Activated naive CD4-positive, alpha-beta T cell treated with anti-CD3 and anti-CD28 coated beads for 36 hours (primary cell): ENCODE measurements at regions of chr14 and their contacts with region 1.

Region 1: GRCh38 chr14:68718023-68718995 is 74.6 kb downstream of the ZFP36L1 start:
- DNase-seq: peak; percentile 34
- H3K4me3 Mint-ChIP-seq: no peak overlapping the region
- H3K27ac Mint-ChIP-seq: no peak overlapping the region
- H3K4me1 Mint-ChIP-seq: peaks cover 32% of the 10 kb centered on the region
- H3K27me3 Mint-ChIP-seq: no peaks in the 10 kb centered on the region

Region 2: DNA sequence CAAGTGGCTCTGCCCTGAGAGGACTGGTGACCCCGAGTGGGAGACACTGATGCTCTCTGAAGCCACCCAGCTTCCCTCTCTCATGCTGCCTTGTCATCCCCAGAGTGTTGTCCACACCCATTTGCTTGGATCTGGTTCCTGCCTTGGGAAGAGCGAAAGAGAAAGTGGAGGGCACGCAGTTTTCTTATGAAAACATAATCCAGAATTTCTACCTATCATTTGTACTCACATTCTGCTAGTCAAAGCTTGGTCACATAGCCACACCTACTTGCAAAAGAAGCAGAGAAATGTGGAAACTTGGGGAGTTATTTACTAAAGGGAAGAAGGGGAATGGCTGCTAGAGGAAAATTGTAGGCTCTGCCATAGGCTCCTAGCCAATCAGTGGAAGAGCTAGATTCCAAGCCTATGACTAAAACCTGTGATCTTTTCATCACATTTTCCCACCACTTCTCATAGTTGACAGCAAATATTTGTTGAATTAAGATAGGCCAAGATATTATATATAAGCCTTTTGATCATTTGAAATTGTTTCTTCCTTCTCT is 251.7 kb before region 1 on chr14:
- CTCF ChIA-PET with region 1: no interaction called
- intact Hi-C with region 1: loop called (anchors 1 kb)
- DNase-seq: no peak
- H3K4me3 Mint-ChIP-seq: no peak overlapping the region
- H3K27ac Mint-ChIP-seq: no peak overlapping the region
- H3K4me1 Mint-ChIP-seq: peaks cover 30% of the 10 kb centered on the region
- H3K27me3 Mint-ChIP-seq: no peaks in the 10 kb centered on the region

Region 3: DNA sequence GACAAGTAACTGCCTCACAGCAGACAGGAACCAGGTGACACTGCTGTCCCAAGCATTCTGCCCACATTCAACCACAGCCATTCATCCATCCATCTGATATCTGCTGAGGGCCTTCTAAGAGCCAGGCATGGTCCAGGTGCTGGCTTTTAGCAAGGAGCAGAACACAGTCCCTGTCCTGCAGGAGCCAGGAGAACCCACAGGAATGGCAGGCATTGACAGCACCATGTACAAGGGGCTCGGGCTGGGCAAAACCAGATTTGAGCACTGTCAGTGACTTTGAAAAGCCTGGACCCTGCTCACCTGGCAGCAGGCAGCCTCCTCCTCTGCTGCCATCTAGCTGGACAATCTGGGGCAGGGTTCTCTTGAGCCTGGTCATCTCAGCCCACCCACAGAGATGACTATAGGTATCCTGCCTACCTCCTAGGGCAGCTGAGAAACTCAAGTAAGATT is 62.4 kb before region 1 on chr14:
- CTCF ChIA-PET with region 1: no interaction called
- intact Hi-C with region 1: no loop called
- DNase-seq: no peak
- H3K4me3 Mint-ChIP-seq: no peak overlapping the region
- H3K27ac Mint-ChIP-seq: no peak overlapping the region
- H3K4me1 Mint-ChIP-seq: peaks cover 4% of the 10 kb centered on the region
- H3K27me3 Mint-ChIP-seq: no peaks in the 10 kb centered on the region

Region 4: DNA sequence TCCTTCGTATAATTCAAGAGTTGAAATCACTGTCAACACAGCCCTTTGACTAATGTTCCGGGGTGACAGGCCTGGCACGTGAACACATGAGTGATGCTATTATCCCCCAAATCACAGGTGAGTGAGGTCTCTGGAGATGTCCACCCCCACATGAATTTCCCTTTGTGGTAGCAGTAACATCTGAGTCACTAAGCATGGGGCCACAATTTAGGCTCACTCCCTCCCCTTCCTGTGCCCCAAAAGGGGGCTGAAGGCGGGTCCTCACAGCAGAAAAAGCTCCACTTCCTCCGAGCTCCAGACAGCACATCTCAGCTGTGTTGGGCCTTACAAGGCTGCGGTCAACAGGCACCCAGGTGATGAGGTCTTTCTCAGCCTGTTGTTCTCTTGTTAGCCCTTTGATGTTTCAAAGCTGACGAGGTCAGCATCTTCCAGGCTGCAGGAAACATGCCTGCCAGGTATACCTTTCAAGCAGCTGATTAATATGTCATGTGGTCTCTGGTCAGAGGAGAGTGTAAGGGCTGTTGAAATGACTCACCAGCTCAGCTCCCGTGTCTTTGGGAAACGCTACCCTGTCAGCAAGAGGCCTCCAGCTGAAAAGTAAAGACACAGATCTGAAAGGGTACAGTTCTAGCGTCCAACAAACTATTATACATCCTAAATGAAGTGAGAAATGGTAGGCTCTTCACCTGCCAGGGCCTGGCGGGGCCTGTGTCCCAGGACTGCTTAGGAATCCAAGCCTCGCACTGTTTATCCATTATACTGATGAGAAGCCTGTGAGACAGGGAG is 32.7 kb before region 1 on chr14:
- CTCF ChIA-PET with region 1: interaction called, 4 read pairs
- intact Hi-C with region 1: loop called (anchors 1 kb)
- DNase-seq: peak; percentile 90
- H3K4me3 Mint-ChIP-seq: peak overlapping the region; percentile 19
- H3K27ac Mint-ChIP-seq: peak overlapping the region; percentile 91
- H3K4me1 Mint-ChIP-seq: peaks cover 54% of the 10 kb centered on the region
- H3K27me3 Mint-ChIP-seq: no peaks in the 10 kb centered on the region

Region 5: DNA sequence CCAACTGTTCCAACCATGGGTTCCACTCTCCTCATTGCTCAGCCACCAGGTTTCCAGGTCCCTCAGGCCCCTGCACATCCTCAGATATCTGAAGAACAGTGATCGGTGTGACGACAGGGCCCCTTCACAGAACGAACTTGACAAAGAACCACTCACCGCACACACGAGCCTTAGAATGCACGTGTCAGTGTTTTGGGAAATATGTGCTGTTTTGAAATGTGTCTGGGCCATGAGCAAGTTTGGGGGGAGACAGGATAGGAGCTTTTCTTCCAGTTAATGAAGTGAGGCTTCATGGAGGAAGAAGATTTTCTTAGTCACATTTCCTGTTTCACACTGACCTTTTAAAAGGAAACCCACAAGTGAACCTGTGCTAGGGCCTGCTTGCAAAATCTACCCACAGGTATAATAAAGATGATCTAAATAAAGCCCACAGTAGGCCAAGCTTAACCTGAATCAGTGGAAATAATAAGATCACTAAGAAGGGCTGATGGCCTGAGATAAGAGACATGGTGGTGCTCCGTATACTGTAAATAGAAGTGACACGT is 16.0 kb after region 1 on chr14:
- CTCF ChIA-PET with region 1: interaction called, 3 read pairs
- intact Hi-C with region 1: loop called (anchors 1 kb)
- DNase-seq: peak; percentile 56
- H3K4me3 Mint-ChIP-seq: no peak overlapping the region
- H3K27ac Mint-ChIP-seq: peak overlapping the region; percentile 55
- H3K4me1 Mint-ChIP-seq: peaks cover 26% of the 10 kb centered on the region
- H3K27me3 Mint-ChIP-seq: no peaks in the 10 kb centered on the region

Region 6: GRCh38 chr14:68780358-68781160 is 62.2 kb after region 1 on chr14:
- CTCF ChIA-PET with region 1: interaction called, 8 read pairs
- intact Hi-C with region 1: loop called (anchors 1 kb)
- DNase-seq: peak; percentile 48
- H3K4me3 Mint-ChIP-seq: peak overlapping the region; percentile 61
- H3K27ac Mint-ChIP-seq: peak overlapping the region; percentile 62
- H3K4me1 Mint-ChIP-seq: peaks cover 72% of the 10 kb centered on the region
- H3K27me3 Mint-ChIP-seq: no peaks in the 10 kb centered on the region

Region 7: GRCh38 chr14:68843471-68844209 is 125.3 kb after region 1 on chr14:
- CTCF ChIA-PET with region 1: interaction called, 5 read pairs
- intact Hi-C with region 1: loop called (anchors 1 kb)
- DNase-seq: peak; percentile 86
- H3K4me3 Mint-ChIP-seq: no peak overlapping the region
- H3K27ac Mint-ChIP-seq: no peak overlapping the region
- H3K4me1 Mint-ChIP-seq: peaks cover 23% of the 10 kb centered on the region
- H3K27me3 Mint-ChIP-seq: no peaks in the 10 kb centered on the region